Pancreas (tissue), 10 donors: ENCODE measurements at regions of chr21 and their contacts with region 1.

Region 1: GRCh38 chr21:14143999-14144398 is 66.8 kb downstream of the LIPI start:
- DNase-seq: no peak
- ATAC-seq: no peak
- H3K4me3 ChIP-seq: no peak overlapping the region
- H3K27ac ChIP-seq: no peak overlapping the region
- H3K4me1 ChIP-seq: no peaks in the 10 kb centered on the region
- H3K27me3 ChIP-seq: no peaks in the 10 kb centered on the region
- CTCF ChIP-seq: no peak

Region 2: DNA sequence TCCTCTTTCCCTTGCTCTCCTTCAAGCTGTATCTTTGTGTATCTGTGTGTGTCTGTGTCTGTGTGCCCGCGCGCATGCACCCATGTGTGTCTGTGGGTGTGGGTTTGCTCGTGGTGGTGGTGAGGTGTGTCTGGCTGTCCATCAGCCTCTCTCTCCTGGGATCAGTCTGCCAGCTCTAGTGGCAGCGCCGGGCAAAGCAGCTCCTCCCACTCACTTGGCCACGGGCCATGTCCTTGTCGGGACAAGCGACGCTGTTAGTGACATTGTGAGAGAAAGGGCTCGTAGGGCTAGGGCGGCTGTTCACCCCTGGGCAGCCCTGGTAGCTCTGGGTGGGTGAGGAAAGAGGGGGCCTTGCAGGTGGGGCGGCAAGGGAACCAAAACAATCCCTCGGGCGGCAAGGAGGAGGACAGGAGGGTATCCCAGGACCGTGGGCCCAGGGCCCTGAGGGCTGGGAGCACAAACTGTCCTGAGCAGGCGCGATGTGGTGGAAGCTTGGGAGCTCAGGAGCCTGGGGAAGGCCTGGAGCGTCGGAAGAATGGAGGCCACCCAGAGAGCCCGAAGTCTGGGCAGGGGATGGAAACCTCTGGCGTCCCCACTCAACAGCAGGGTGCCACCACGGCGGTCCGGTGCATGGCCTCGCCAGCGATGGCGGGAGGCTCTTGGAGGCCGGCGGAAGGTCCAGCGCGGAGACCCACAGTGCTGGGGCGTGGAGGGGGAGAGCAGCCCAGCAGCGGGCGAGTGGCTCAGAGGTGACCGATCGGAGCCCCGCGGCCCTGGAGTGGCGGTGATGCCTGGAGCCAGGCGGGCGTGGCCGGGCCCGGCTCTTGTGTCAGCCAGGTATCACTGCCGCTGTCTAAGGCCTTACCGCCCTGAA is 73.7 kb before region 1 on chr21:
- intact Hi-C with region 1: loop called in 1 of 3 experiments (anchors 10 kb)
- DNase-seq: peak in 1 of 6 donors; percentile 64
- ATAC-seq: no peak
- H3K4me3 ChIP-seq: no peak overlapping the region
- H3K27ac ChIP-seq: no peak overlapping the region
- H3K4me1 ChIP-seq: no peaks in the 10 kb centered on the region
- H3K27me3 ChIP-seq: no peaks in the 10 kb centered on the region
- CTCF ChIP-seq: no peak

Region 3: DNA sequence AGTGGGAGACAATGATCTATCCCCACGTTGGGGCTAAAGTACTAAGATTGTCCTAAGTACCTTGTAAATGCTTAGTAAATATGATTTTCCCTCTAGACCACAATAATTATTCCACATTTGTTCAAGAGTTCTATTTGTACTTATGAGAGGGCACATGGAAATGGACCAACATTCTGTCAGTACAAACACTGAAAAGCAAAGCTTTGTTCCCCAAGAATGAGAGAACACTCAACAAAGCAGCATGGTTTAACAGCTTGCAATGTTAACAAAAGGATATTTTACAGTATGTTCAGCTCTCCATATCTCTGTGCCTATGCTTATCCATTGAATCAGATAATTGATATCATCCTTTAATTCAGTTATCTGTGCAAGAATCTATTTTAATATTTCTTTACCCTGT is 107.3 kb after region 1 on chr21:
- intact Hi-C with region 1: no loop called
- DNase-seq: no peak
- ATAC-seq: no peak
- H3K4me3 ChIP-seq: no peak overlapping the region
- H3K27ac ChIP-seq: no peak overlapping the region
- H3K4me1 ChIP-seq: no peaks in the 10 kb centered on the region
- H3K27me3 ChIP-seq: peaks cover 0 to 9% (median 0%) of the 10 kb centered on the region in 4 donors
- CTCF ChIP-seq: no peak